Sigmoid colon (tissue), 7 donors: ENCODE measurements at regions of chr22 and their contacts with region 1.

Region 1: GRCh38 chr22:41022470-41023298 is 69.7 kb upstream of the EP300 start:
- DNase-seq: peak; percentile 98
- H3K4me3 ChIP-seq: peak overlapping the region; percentile 52 to 73 (median 64)
- H3K27ac ChIP-seq: peak overlapping the region; percentile 96 to 99 (median 98)
- H3K4me1 ChIP-seq: peaks cover 0 to 18% (median 11%) of the 10 kb centered on the region in 4 donors
- H3K27me3 ChIP-seq: no peaks in the 10 kb centered on the region
- CTCF ChIP-seq: peak in 1 of 4 experiments; percentile 5
- EP300 ChIP-seq: peak in 2 of 4 donors; percentile 43 to 71
- POLR2A ChIP-seq: peak; percentile 89 to 90

Region 2: DNA sequence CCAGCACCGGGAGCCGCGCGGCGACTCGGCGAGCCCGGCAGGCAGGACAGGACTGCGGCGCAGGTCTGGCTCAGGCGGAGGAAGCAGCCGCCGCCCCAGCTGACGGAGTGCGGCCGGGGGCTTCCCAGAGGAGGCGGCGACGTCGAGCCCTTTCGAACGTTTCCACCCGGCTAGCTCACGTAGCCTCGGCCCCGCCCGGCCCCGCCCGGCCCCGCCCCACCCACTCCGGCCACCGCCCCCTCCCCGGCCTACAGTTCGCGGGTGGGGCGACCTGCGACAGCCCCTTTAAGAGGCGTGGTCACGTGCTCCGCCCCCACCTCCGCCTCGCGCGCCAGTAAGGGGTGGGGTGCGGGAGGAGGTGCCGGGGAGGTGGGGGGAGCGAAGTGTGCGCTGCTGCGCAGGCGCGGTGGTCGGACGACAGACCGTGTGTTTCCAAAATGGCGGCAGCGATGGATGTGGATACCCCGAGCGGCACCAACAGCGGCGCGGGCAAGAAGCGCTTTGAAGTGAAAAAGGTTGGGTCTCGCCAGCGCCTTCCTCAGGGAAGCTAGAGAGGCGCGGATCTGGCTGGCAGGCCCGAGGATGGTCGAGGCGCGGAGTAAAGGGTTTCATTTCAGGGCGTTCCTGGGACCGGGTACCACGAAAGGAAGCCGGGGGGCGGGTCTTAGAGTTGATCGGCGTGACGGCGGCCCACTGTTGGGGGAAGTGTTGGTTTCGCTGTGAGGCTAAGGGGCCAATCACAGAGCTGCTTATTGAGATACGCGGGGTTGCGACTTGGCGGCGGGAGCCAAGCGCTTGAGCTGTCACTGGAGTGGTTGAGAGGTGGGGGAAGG is 71.5 kb before region 1 on chr22 and contains the start of gene RBX1:
- intact Hi-C with region 1: loop called (anchors 1 kb)
- DNase-seq: peak; percentile 99
- H3K4me3 ChIP-seq: peak within 1 kb of the TSS; percentile 72 to 86 (median 80)
- H3K27ac ChIP-seq: peak within 1 kb of the TSS; percentile 96 to 98 (median 97)
- H3K4me1 ChIP-seq: peaks cover 0 to 38% (median 23%) of the 10 kb centered on the region in 4 donors
- H3K27me3 ChIP-seq: no peaks in the 10 kb centered on the region
- CTCF ChIP-seq: no peak
- EP300 ChIP-seq: peak in 1 of 4 donors; percentile 79
- POLR2A ChIP-seq: peak; percentile 25 to 39
- total RNA-seq, gene RBX1: 32.4 to 72.8 (median 51.2) TPM

Region 3: DNA sequence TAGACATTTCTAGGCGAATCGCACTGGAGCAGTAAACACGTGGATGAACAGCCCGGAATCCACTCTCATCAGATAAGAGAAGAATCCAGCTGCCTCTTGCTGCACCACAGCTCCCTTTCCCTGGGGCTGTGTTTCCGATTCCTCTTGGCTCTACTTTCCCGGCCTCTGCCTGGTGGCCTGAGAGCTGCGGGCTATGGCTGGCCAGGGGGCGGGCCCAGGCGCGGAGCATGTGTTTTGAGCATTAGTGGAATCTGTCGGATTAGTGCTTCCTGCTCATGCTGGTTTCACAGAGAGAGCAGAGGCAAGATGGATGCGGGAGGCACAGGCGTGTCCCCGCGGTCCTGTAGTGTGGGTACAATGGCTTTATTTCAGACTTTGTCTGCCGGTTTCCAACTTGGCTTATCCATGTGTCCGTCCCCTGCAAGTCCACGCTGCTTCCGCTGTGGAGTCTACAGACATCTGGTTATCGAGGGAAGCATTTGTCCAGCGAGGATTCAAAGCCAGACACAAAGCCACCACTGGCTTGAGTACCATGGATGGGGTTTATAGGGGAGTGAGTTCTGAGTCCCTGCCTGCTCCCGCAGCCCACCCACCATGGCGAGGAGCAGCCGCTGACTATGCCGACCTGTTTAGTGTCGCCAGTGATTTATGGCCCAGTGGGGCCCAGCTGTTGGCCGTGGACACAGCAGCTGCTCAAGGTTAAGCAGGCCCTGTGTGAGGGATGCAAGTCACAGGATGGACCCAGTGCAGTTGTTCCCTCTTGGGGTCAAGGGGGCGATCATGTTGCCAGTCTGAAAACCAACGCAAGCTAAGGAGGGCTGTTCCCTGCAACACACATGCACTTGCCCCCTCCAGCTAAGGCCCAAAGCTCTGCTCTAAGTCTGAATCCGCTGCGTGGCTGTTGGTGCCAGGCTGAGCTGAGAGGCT is 26.4 kb after region 1 on chr22:
- intact Hi-C with region 1: loop called (anchors 2 kb)
- DNase-seq: peak; percentile 89
- H3K4me3 ChIP-seq: peak overlapping the region in 3 of 4 donors; percentile 34 to 44 (median 41)
- H3K27ac ChIP-seq: peak overlapping the region; percentile 61 to 73 (median 66)
- H3K4me1 ChIP-seq: peaks cover 0 to 15% (median 6%) of the 10 kb centered on the region in 4 donors
- H3K27me3 ChIP-seq: no peaks in the 10 kb centered on the region
- CTCF ChIP-seq: no peak
- EP300 ChIP-seq: no peak
- POLR2A ChIP-seq: no peak